Tibial artery (tissue), 4 donors: ENCODE measurements at regions of chr5 and their contacts with region 1.

Region 1: DNA sequence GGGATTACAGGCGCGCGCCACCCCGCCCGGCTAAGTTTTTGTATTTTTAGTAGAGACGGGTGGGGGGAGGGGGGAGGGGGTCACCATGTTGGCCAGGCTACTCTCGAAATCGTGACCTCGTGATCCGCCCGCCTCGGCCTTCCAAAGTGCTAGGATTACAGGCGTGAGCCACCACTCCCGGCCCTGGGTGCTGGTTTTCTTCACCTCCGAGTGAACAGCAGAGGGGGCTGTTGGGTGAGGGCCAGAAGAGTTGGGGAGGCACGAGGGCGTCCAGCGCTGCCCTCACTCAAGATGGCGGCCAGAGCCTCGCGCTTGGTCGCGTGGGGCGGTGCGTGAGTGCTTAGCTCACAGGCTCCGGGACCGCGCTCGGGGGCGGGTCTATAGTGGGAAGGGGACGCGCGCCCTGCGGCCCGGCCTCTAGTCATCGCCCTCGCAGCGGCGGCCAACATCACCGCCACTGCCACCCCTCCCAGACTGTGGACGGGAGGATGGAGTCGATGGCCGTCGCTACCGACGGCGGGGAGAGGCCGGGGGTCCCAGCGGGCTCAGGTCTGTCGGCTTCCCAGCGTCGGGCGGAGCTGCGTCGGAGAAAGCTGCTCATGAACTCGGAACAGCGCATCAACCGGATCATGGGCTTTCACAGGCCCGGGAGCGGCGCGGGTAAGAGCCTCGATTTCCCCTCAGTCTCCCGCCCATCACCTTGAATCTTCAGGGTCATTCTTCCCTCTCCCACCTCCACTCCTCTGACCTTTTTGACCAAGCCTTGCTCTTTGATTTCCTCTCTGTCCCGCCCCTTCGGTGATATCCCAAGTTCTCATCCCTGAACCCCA is at the start of gene CAMLG:
- DNase-seq: peak; percentile 98 to 99
- H3K4me3 ChIP-seq: peak within 1 kb of the TSS; percentile 58 to 69
- H3K27ac ChIP-seq: peak within 1 kb of the TSS; percentile 90 to 94
- H3K4me1 ChIP-seq: peaks cover 0 to 25% (median 18%) of the 10 kb centered on the region in 4 donors
- H3K27me3 ChIP-seq: no peaks in the 10 kb centered on the region
- CTCF ChIP-seq: peak; percentile 39 to 49

Region 2: GRCh38 chr5:134642931-134643530 is 95.3 kb before region 1 on chr5:
- intact Hi-C with region 1: no loop called
- DNase-seq: no peak
- H3K4me3 ChIP-seq: no peak overlapping the region
- H3K27ac ChIP-seq: no peak overlapping the region
- H3K4me1 ChIP-seq: peaks cover 0 to 10% (median 8%) of the 10 kb centered on the region in 4 donors
- H3K27me3 ChIP-seq: no peaks in the 10 kb centered on the region
- CTCF ChIP-seq: no peak

Region 3: GRCh38 chr5:134758504-134759341 is 20.4 kb after region 1 on chr5 and contains the start of gene DDX46:
- intact Hi-C with region 1: loop called (anchors 2 kb)
- DNase-seq: peak; percentile 90 to 95
- H3K4me3 ChIP-seq: peak within 1 kb of the TSS; percentile 83 to 91
- H3K27ac ChIP-seq: peak within 1 kb of the TSS; percentile 69 to 79
- H3K4me1 ChIP-seq: peaks cover 0 to 28% (median 20%) of the 10 kb centered on the region in 4 donors
- H3K27me3 ChIP-seq: no peaks in the 10 kb centered on the region
- CTCF ChIP-seq: peak; percentile 47 to 65

Region 4: DNA sequence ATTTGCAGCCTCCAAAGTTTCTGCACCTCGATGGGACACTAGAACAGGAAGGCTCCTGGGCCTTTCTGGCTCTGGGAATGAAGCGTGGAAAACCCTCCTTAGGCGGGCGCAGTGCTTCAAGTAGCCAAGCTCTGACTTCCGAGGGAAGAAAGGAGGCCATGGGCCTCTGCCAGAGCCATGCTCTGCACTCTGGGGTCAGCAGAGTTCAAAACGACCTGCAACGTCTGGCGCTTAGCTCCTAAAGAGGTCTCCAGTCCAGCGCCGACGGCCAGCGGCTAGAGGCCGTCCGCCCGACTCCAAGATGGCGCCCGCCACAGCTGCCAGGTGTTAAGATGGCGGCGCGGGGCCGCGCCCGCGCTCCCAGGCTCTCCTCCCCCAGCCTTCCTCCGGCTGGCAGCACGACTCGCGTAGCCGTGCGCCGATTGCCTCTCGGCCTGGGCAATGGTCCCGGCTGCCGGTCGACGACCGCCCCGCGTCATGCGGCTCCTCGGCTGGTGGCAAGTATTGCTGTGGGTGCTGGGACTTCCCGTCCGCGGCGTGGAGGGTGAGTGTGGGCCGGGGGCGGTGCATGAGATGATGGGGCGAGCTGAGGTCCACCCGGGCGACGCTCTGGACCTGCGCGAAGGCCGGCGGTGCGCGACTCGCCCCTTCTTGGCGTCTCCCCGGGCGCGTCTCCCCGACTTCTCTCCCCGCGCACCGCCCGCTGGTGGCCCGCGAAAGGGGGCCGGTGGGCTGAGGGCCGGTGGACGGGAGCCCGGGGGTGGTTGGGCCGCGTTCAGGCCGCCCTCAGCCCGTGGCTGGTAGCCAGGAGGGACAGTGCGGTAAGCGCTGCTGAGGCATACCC is 135.9 kb after region 1 on chr5 and contains the start of gene TXNDC15:
- intact Hi-C with region 1: no loop called
- DNase-seq: peak; percentile 86 to 92
- H3K4me3 ChIP-seq: peak within 1 kb of the TSS; percentile 84 to 91
- H3K27ac ChIP-seq: peak within 1 kb of the TSS; percentile 96 to 97
- H3K4me1 ChIP-seq: peaks cover 0 to 21% (median 16%) of the 10 kb centered on the region in 4 donors
- H3K27me3 ChIP-seq: no peaks in the 10 kb centered on the region
- CTCF ChIP-seq: no peak